ENCODE measurements at regions of chr2 and their contacts with region 1.

Region 1: GRCh38 chr2:176653479-176654443 is 384.5 kb downstream of the MTX2 start:
- DNase-seq: no peak
- ATAC-seq: peak; percentile 74
- H3K4me3 Mint-ChIP-seq: no peak overlapping the region
- H3K27ac Mint-ChIP-seq: no peak overlapping the region
- H3K4me1 Mint-ChIP-seq: no peaks in the 10 kb centered on the region
- H3K27me3 Mint-ChIP-seq: peaks cover 23% of the 10 kb centered on the region
- CTCF ChIP-seq: no peak

Region 2: DNA sequence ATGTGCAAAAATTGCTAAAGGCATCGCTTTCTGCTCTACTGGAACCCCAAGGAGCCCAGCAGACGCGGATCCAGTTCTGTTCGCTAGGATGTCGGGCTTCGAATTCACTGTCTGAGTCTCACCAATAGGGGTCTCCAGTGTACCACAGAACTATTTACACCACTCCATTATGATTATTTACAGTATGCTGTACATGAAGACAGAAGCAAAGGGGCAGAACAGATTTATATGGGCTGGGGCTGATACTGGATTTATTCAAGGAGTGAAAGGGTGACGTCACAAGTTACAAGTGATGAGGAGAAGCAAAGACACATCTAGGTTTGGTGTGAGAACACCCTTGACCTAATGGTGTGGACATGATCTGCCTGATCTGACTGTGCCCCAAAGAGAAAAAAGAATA is 1286.9 kb before region 1 on chr2:
- CTCF ChIA-PET with region 1: no interaction called
- POLR2A ChIA-PET with region 1: no interaction called
- intact Hi-C with region 1: loop called (anchors 5 kb)
- DNase-seq: no peak
- ATAC-seq: no peak
- H3K4me3 Mint-ChIP-seq: no peak overlapping the region
- H3K27ac Mint-ChIP-seq: no peak overlapping the region
- H3K4me1 Mint-ChIP-seq: no peaks in the 10 kb centered on the region
- H3K27me3 Mint-ChIP-seq: peaks cover 9% of the 10 kb centered on the region
- CTCF ChIP-seq: peak; percentile 57

Region 3: DNA sequence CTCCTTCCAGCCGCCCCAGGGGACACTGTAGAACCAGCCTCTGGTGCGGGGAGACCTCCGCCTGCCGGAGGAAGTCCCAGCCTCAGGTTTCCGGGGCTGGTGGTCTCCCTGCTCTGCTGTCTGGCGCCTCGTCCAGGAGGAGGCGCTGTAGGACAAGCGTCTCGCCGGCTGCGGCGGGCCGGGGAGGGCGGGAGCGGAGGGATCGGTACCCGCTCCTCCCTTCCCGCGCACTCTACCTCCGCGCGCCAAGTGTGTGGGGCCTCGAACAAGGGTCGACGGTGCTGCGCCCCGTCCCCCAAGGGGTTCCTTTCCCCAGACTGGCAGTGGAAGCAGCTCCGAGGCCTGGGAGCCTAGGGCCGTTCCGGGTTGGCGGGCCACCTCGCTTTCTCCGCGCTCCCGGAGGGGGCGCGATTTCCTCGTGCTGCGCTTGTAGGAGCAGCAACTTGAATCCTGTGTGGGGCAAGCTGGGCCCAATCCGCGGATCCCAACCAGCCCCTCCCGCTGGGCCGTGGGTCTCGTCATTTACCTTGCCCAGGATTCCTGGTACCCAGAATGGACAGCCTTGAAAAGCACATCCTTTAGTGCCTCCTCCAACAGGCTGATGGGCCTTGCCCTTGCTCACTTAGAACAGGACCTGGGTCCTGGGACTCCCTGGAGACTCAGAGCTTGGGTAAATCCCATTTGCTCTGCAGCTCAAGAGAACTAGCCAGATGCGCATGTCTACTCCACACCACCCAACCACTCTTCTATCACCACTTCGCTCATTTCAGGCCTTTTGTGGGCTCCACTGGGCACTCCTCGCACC is 513.0 kb before region 1 on chr2:
- CTCF ChIA-PET with region 1: interaction called, 3 read pairs
- POLR2A ChIA-PET with region 1: no interaction called
- intact Hi-C with region 1: loop called (anchors 5 kb)
- DNase-seq: peak; percentile 39
- ATAC-seq: peak; percentile 73
- H3K4me3 Mint-ChIP-seq: peak overlapping the region; percentile 28
- H3K27ac Mint-ChIP-seq: no peak overlapping the region
- H3K4me1 Mint-ChIP-seq: peaks cover 17% of the 10 kb centered on the region
- H3K27me3 Mint-ChIP-seq: peaks cover 74% of the 10 kb centered on the region
- CTCF ChIP-seq: no peak

Region 4: DNA sequence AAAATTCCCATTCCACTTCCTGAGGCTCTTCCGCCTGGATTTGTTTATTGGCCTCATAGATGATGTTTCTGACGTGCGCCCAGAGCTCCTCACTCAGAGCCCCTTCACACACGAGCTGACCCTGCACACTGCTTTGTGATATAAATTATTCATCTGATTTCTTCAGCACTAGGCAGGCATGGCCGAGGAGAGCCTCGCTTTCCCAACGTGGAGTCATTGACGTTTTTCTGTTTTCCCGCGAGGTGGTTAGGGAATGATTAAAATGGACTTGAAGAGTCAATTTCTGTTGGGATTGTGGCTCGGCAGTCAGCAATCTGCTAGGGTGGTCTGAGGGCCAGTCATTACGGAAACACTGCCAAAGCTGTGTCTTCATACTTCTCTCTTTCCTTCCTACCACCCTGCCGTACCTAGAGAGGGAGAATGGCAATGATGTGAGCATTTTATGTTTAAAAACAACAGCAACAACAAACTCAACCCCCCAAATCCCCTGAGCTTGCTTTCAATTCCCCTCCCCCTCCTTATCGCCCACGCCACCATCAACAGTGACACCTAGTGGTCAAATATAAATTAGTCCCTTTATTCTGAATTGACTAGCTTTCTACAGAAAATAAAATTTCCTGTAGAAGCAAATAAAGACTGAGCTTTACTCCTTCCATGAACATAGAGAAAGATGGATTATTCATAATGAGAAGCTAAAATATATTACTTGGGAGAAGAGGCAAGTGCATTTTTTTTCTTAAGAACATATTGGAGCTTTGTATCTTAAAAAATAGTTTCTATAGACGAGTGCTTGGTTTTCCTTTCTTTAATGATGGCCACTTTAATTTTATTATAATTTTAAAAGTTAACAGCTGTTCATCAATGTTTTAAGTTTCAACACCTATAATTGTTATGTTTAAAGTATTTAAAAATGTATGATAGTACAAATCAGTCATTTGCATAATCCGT is 99.4 kb before region 1 on chr2:
- CTCF ChIA-PET with region 1: interaction called, 7 read pairs
- POLR2A ChIA-PET with region 1: no interaction called
- intact Hi-C with region 1: loop called (anchors 5 kb)
- DNase-seq: no peak
- ATAC-seq: peak; percentile 49
- H3K4me3 Mint-ChIP-seq: peak overlapping the region; percentile 71
- H3K27ac Mint-ChIP-seq: no peak overlapping the region
- H3K4me1 Mint-ChIP-seq: peaks cover 11% of the 10 kb centered on the region
- H3K27me3 Mint-ChIP-seq: peaks cover 30% of the 10 kb centered on the region
- CTCF ChIP-seq: peak; percentile 80

Region 5: DNA sequence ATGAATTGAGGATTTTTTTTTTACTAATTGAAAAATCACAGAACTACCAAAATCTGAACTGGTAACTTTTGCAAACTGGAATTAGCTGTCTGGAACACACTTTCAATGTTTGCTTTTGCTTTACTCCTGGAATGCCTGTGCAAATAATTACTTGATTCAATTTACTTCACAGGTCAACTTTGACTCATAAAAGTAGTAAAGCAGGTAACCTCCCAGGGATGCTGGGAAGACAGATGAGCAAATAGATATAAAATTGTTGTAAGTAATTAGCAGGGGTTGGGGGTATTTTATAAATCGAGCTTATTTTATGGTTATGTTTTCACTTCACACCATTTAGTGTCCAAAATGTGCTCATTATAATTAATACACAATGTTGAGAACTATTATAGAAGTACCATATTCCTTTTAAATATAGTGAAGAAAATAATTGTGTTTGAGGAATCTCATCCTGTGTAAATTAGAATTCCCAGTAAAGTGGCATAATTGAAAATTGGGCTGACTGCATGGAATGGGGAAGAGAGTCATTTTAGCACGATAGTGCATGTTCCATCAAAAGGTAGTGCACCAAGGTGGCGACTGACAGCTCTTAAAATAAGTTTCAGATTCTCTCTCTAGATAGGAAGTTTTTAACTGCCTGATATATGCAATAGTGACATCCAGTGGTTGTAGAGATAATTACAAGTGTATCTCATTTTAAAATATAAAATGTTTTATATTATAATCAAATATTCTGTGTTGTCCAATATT is 160.7 kb after region 1 on chr2:
- CTCF ChIA-PET with region 1: interaction called, 4 read pairs
- POLR2A ChIA-PET with region 1: no interaction called
- intact Hi-C with region 1: loop called (anchors 5 kb)
- DNase-seq: no peak
- ATAC-seq: no peak
- H3K4me3 Mint-ChIP-seq: no peak overlapping the region
- H3K27ac Mint-ChIP-seq: no peak overlapping the region
- H3K4me1 Mint-ChIP-seq: peaks cover 2% of the 10 kb centered on the region
- H3K27me3 Mint-ChIP-seq: peaks cover 3% of the 10 kb centered on the region
- CTCF ChIP-seq: no peak

Region 6: GRCh38 chr2:176892676-176893226 is 239.0 kb after region 1 on chr2:
- CTCF ChIA-PET with region 1: no interaction called
- POLR2A ChIA-PET with region 1: no interaction called
- intact Hi-C with region 1: no loop called
- DNase-seq: no peak
- ATAC-seq: no peak
- H3K4me3 Mint-ChIP-seq: no peak overlapping the region
- H3K27ac Mint-ChIP-seq: no peak overlapping the region
- H3K4me1 Mint-ChIP-seq: no peaks in the 10 kb centered on the region
- H3K27me3 Mint-ChIP-seq: peaks cover 4% of the 10 kb centered on the region
- CTCF ChIP-seq: no peak